Breast epithelium (tissue), 4 donors: ENCODE measurements at regions of chr3 and their contacts with region 1.

Region 1: DNA sequence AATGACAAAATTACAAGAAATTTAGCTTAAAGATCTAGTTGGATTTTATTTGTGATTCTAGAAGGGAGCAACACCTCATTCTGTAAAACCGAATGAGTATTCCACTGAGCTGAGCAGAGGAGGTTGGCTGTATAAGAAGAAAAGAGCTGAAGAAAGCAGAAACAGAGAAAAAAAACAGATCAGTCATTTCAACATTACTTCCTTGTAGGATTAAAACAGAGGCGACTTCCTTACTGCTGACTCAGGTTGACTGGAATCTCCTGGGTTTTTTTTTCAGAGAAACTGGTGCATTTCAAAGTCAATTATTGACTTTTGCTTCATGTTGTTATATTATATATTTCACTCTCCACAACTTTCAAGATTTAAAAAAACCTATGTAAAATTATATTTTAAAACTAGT is 368.1 kb upstream of the UBE2E2 start:
- DNase-seq: no peak
- H3K4me3 ChIP-seq: no peak overlapping the region
- H3K27ac ChIP-seq: no peak overlapping the region
- H3K4me1 ChIP-seq: no peaks in the 10 kb centered on the region
- H3K27me3 ChIP-seq: no peaks in the 10 kb centered on the region
- CTCF ChIP-seq: no peak
- POLR2A ChIP-seq: no peak

Region 2: DNA sequence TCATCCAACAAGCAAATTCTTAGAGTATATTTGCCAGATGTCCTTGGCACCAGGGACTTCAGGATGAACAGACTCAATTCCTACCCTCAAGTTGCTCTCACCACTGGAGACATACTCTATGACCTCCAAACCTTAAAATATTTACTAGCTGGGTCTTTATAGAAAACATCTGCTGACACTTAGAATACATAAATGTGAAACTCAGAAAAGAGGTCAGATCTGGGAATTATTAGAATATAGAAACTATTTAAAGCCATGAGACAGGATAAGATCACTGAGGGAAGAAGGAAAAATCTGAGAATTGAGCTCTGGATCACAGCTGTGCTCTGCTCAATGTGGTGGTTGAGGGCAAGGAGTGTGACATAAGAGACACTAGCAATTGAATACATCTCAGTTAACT is 327.3 kb before region 1 on chr3:
- intact Hi-C with region 1: no loop called
- DNase-seq: no peak
- H3K4me3 ChIP-seq: no peak overlapping the region
- H3K27ac ChIP-seq: no peak overlapping the region
- H3K4me1 ChIP-seq: no peaks in the 10 kb centered on the region
- H3K27me3 ChIP-seq: no peaks in the 10 kb centered on the region
- CTCF ChIP-seq: no peak
- POLR2A ChIP-seq: no peak

Region 3: GRCh38 chr3:22759636-22760310 is 75.3 kb before region 1 on chr3:
- intact Hi-C with region 1: no loop called
- DNase-seq: no peak
- H3K4me3 ChIP-seq: no peak overlapping the region
- H3K27ac ChIP-seq: no peak overlapping the region
- H3K4me1 ChIP-seq: no peaks in the 10 kb centered on the region
- H3K27me3 ChIP-seq: no peaks in the 10 kb centered on the region
- CTCF ChIP-seq: no peak
- POLR2A ChIP-seq: no peak

Region 4: DNA sequence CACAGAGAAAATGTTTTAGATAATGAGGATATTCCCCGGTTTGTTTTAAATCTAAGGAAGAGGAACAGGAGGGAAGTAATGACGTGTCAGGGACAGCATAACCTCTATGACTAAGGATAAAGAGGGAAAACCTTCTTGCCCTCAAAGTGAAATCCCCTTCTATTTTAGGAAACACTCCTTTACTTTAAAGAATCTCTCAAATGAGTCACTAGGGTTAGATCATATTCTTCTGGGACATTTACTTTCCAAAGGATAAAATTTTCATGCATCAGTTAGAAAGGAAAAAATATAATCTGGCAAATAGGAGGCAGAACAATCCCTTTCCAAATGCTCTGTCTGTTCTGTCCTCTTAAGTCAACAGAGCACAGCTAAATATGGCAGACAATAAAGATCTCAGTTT is 324.9 kb after region 1 on chr3:
- intact Hi-C with region 1: loop called (anchors 10 kb)
- DNase-seq: no peak
- H3K4me3 ChIP-seq: no peak overlapping the region
- H3K27ac ChIP-seq: peak overlapping the region in 1 of 2 donors; percentile 36
- H3K4me1 ChIP-seq: no peaks in the 10 kb centered on the region
- H3K27me3 ChIP-seq: no peaks in the 10 kb centered on the region
- CTCF ChIP-seq: no peak
- POLR2A ChIP-seq: no peak

Region 5: GRCh38 chr3:23668430-23668904 is 833.4 kb after region 1 on chr3:
- intact Hi-C with region 1: no loop called
- DNase-seq: no peak
- H3K4me3 ChIP-seq: no peak overlapping the region
- H3K27ac ChIP-seq: no peak overlapping the region
- H3K4me1 ChIP-seq: no peaks in the 10 kb centered on the region
- H3K27me3 ChIP-seq: no peaks in the 10 kb centered on the region
- CTCF ChIP-seq: no peak
- POLR2A ChIP-seq: no peak